ENCODE measurements at regions of chr17 and their contacts with region 1.

Region 1: GRCh38 chr17:42388381-42389134 is at the start of gene STAT3:
- DNase-seq: peak; percentile 98 to 100
- H3K4me3 ChIP-seq: peak within 1 kb of the TSS; percentile 77
- H3K27ac ChIP-seq: peak within 1 kb of the TSS; percentile 39
- H3K4me1 ChIP-seq: peaks cover 30% of the 10 kb centered on the region
- H3K27me3 ChIP-seq: no peaks in the 10 kb centered on the region
- CTCF ChIP-seq: no peak
- total RNA-seq, gene STAT3: 65.2 and 74.6 TPM in 2 replicates

Region 2: GRCh38 chr17:42329025-42329976 is 59.3 kb before region 1 on chr17:
- CTCF ChIA-PET with region 1: no interaction called
- POLR2A ChIA-PET with region 1: interaction called, 6 read pairs
- intact Hi-C with region 1: loop called (anchors 2 kb)
- DNase-seq: peak; percentile 71 to 92
- H3K4me3 ChIP-seq: peak overlapping the region; percentile 42; the same call in 1 of the 2 replicates
- H3K27ac ChIP-seq: peak overlapping the region; percentile 96
- H3K4me1 ChIP-seq: peaks cover 69% of the 10 kb centered on the region
- H3K27me3 ChIP-seq: no peaks in the 10 kb centered on the region
- CTCF ChIP-seq: no peak

Region 3: DNA sequence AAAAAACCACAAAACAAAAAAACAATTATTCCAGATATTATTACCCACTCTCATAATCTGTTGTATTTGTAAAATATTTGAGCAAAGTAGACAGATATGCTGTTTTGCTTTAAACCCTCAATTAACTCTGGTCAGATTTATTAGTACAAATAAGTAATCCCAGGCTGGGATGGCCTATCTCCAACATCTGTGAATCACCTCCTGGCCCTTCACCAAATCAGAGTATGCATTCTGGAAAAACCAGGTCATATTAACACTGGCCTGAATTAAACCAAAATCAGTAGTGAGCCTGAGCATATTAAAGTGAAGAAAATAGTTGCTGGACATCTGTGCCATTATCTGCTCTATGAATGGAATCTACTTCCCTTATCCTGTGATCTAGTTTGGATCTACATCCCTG is 41.4 kb before region 1 on chr17:
- CTCF ChIA-PET with region 1: no interaction called
- POLR2A ChIA-PET with region 1: no interaction called
- intact Hi-C with region 1: loop called (anchors 5 kb)
- DNase-seq: peak; percentile 29 to 77
- H3K4me3 ChIP-seq: no peak overlapping the region
- H3K27ac ChIP-seq: peak overlapping the region; percentile 47
- H3K4me1 ChIP-seq: peaks cover 14% of the 10 kb centered on the region
- H3K27me3 ChIP-seq: no peaks in the 10 kb centered on the region
- CTCF ChIP-seq: no peak

Region 4: GRCh38 chr17:42414704-42415409 is 26.3 kb after region 1 on chr17:
- CTCF ChIA-PET with region 1: no interaction called
- POLR2A ChIA-PET with region 1: interaction called, 10 read pairs
- intact Hi-C with region 1: no loop called
- DNase-seq: no peak
- H3K4me3 ChIP-seq: no peak overlapping the region
- H3K27ac ChIP-seq: no peak overlapping the region
- H3K4me1 ChIP-seq: peaks cover 40% of the 10 kb centered on the region
- H3K27me3 ChIP-seq: no peaks in the 10 kb centered on the region
- CTCF ChIP-seq: no peak

Region 5: DNA sequence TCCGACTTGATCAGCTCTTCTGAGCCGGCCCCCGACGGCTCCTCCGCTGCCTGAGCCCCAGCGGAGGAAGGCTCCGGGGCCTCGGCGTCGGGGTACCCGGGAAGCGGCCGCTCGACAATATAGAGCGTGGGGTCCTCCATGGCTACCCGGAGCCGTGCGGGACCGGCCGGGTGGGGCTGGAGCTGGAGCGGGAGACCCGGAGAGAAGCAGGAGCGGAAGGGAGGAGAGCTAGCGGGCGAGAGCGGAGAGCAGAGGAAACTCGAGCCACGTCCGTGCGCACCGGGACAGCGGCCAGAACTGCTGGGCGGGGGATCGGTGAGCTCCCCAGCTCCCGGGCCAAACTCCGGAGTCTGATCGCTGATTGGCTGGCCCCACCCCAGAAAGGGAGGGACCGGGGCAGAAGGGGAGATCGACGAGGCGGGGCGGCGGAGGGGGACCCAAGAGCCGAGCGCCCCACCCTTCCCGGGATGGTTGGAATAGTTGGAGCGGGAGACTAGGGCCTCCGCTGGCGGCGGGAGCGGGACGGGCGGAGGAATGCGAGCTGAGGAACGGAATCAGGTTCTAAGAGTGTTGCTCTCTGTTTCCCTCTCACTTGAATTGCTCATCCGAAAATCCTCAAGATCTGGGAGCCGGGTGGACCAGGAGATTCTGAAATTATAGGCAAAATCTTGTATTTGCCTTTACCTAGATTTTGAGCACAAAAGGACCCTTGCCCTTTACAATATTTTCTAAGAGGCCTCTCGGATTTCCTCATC is 34.6 kb after region 1 on chr17 and contains the start of gene CAVIN1:
- CTCF ChIA-PET with region 1: interaction called, 3 read pairs
- POLR2A ChIA-PET with region 1: interaction called, 23 read pairs
- intact Hi-C with region 1: loop called (anchors 2 kb)
- DNase-seq: peak; percentile 82 to 97
- H3K4me3 ChIP-seq: peak within 1 kb of the TSS; percentile 76
- H3K27ac ChIP-seq: 0 out of 2 replicates have a peak within 1 kb of the TSS, but pooled peaks have one; percentile 12
- H3K4me1 ChIP-seq: peaks cover 43% of the 10 kb centered on the region
- H3K27me3 ChIP-seq: no peaks in the 10 kb centered on the region
- CTCF ChIP-seq: no peak
- total RNA-seq, gene CAVIN1: 154 and 170 TPM in 2 replicates

Region 6: GRCh38 chr17:42642336-42642735 is 253.8 kb after region 1 on chr17:
- CTCF ChIA-PET with region 1: no interaction called
- POLR2A ChIA-PET with region 1: no interaction called
- intact Hi-C with region 1: no loop called
- DNase-seq: no peak
- H3K4me3 ChIP-seq: no peak overlapping the region
- H3K27ac ChIP-seq: no peak overlapping the region
- H3K4me1 ChIP-seq: no peaks in the 10 kb centered on the region
- H3K27me3 ChIP-seq: no peaks in the 10 kb centered on the region
- CTCF ChIP-seq: no peak